Dendritic cell treated with granulocyte-macrophage colony-stimulating factor and Interleukin-4, amounts not matched to agents 40 ng/mL and 50 ng/mL, for 4 days (primary cell): ENCODE measurements at regions of chr1 and their contacts with region 1.

Region 1: DNA sequence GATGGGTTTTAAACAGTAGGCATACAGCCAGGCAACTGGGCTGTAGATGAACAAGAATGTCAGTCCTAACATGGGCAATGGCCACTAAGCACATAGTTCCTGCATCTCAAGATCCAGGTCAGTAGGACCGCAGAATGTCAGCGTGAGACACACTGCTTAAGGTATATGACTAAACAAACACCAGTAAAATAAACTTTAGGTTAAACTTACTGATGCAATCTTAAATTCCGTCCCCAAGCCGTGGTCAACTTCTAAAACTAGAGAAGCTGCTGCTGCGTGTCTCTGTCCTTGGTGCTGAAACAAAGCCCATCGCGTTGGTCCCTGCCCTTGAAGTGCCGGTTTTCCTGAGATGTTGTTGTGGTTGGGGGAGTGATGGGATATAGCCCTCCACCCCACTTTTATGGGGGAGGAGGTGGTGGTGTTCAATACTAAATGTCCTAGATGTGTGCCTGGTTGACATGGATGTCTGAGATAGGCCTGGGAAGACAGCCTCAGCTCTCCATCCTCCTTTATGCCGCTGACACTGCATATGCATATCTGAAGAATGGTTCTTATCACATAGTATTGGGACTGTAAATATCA is 71.9 kb upstream of the KCNA3 start:
- H3K4me3 Mint-ChIP-seq: no peak overlapping the region
- H3K27ac Mint-ChIP-seq: no peak overlapping the region
- H3K4me1 Mint-ChIP-seq: no peaks in the 10 kb centered on the region
- H3K27me3 Mint-ChIP-seq: peaks cover 49% of the 10 kb centered on the region

Region 2: DNA sequence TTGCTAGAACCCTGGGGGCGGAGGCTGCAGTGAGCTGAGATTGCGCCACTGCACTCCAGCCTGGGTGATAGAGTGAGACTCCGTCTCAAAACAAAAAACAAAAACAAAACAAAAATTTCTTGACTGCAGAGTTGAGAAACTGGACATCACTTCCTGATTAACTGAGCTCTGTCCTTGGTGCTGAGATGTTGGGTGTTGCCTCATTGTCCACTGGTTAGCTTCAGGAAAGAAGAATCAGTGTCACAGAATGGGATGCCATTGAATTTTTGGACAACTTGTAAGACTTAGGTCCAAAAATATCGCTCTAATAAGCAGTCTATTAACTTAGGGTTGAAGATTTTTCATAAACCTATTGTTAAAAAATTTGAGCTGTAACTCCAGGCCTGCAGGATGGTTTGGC is 203.9 kb before region 1 on chr1:
- intact Hi-C with region 1: loop called (anchors 1 kb)
- H3K4me3 Mint-ChIP-seq: no peak overlapping the region
- H3K27ac Mint-ChIP-seq: no peak overlapping the region
- H3K4me1 Mint-ChIP-seq: peaks cover 4% of the 10 kb centered on the region
- H3K27me3 Mint-ChIP-seq: peaks cover 15% of the 10 kb centered on the region

Region 3: GRCh38 chr1:110696818-110697217 is 49.9 kb before region 1 on chr1:
- intact Hi-C with region 1: no loop called
- H3K4me3 Mint-ChIP-seq: no peak overlapping the region
- H3K27ac Mint-ChIP-seq: no peak overlapping the region
- H3K4me1 Mint-ChIP-seq: no peaks in the 10 kb centered on the region
- H3K27me3 Mint-ChIP-seq: no peaks in the 10 kb centered on the region